ENCODE measurements at regions of chr15 and their contacts with region 1.

Region 1: GRCh38 chr15:42650208-42651066 is 75.0 kb downstream of the STARD9 start:
- DNase-seq: peak; percentile 87
- H3K4me3 ChIP-seq: no peak overlapping the region
- H3K27ac ChIP-seq: no peak overlapping the region
- H3K4me1 ChIP-seq: no peaks in the 10 kb centered on the region
- H3K27me3 ChIP-seq: no peaks in the 10 kb centered on the region
- CTCF ChIP-seq: peak; percentile 69 to 79
- POLR2A ChIP-seq: no peak

Region 2: GRCh38 chr15:42273102-42273899 is 377.1 kb before region 1 on chr15 and contains the starts of genes GANC and TMEM87A:
- CTCF ChIA-PET with region 1: no interaction called
- POLR2A ChIA-PET with region 1: no interaction called
- dilution Hi-C with region 1: no loop called
- intact Hi-C with region 1: loop called (anchors 1 kb)
- DNase-seq: peak; percentile 99
- H3K4me3 ChIP-seq: peak within 1 kb of the TSS; percentile 84 to 97 (median 96)
- H3K27ac ChIP-seq: peak within 1 kb of the TSS; percentile 89
- H3K4me1 ChIP-seq: peaks cover 41% of the 10 kb centered on the region
- H3K27me3 ChIP-seq: no peaks in the 10 kb centered on the region
- CTCF ChIP-seq: no peak
- POLR2A ChIP-seq: peak; percentile 94
- total RNA-seq, gene GANC: 17.8 and 20.0 TPM in 2 replicates
- total RNA-seq, gene TMEM87A: 41.1 and 45.5 TPM in 2 replicates

Region 3: GRCh38 chr15:42548253-42549031 is 102.0 kb before region 1 on chr15 and contains the starts of genes HAUS2 and LRRC57:
- CTCF ChIA-PET with region 1: interaction called, 15 read pairs
- POLR2A ChIA-PET with region 1: no interaction called
- dilution Hi-C with region 1: no loop called
- intact Hi-C with region 1: loop called (anchors 1 kb)
- DNase-seq: peak; percentile 88
- H3K4me3 ChIP-seq: peak within 1 kb of the TSS; percentile 65 to 96 (median 89)
- H3K27ac ChIP-seq: peak within 1 kb of the TSS; percentile 41
- H3K4me1 ChIP-seq: peaks cover 27% of the 10 kb centered on the region
- H3K27me3 ChIP-seq: no peaks in the 10 kb centered on the region
- CTCF ChIP-seq: no peak
- POLR2A ChIP-seq: peak; percentile 95
- total RNA-seq, gene HAUS2: 33.5 and 37.8 TPM in 2 replicates
- total RNA-seq, gene LRRC57: 32.8 and 39.2 TPM in 2 replicates

Measured in endothelial cell of umbilical vein (primary cell).